Posterior cingulate gyrus (tissue), 11 donors: ENCODE measurements at regions of chr2 and their contacts with region 1.

Region 1: DNA sequence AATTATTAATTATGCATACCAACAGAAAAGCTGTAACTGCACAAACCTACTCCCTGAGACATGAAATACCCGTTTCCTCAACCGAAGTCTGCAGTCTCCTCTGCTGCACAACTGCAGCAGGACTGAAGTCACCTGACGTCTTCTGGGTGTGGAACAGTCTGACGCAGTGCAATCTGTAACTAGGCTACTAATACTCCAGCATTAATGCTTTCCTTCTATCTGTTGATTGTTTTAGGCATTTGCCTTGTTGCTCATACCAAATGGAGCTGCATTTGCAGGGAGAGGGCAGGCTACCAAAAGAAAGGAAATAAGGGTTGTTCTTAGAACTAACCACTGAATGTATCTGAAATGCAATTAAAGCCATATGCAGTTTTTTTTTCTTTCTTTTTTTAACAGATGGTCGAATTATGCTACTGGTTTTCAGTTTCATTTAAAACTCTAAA is 40.1 kb downstream of the RTN4 start:
- DNase-seq: peak in 9 of 10 donors; percentile 27 to 90 (median 54)

Region 2: GRCh38 chr2:54723131-54723995 is 286.8 kb before region 1 on chr2 and contains the start of gene EML6:
- intact Hi-C with region 1: loop called (anchors 2 kb)
- DNase-seq: peak; percentile 95 to 100 (median 98)

Region 3: GRCh38 chr2:54899576-54900200 is 110.5 kb before region 1 on chr2:
- intact Hi-C with region 1: loop called (anchors 5 kb)
- DNase-seq: peak in 1 of 10 donors; percentile 25

Region 4: GRCh38 chr2:54979321-54980041 is 30.7 kb before region 1 on chr2:
- intact Hi-C with region 1: no loop called
- DNase-seq: no peak